ENCODE measurements at regions of chr2 and their contacts with region 1.

Region 1: GRCh38 chr2:109510136-109511028 is 103.4 kb downstream of the SEPTIN10 start:
- DNase-seq: peak; percentile 50 to 78
- H3K4me3 ChIP-seq: no peak overlapping the region
- H3K27ac ChIP-seq: no peak overlapping the region
- H3K4me1 ChIP-seq: peaks cover 5% of the 10 kb centered on the region; the same call in 1 of the 2 replicates
- H3K27me3 ChIP-seq: no peaks in the 10 kb centered on the region
- CTCF ChIP-seq: peak; percentile 93

Region 2: GRCh38 chr2:108855194-108855593 is 655.2 kb before region 1 on chr2:
- CTCF ChIA-PET with region 1: no interaction called
- POLR2A ChIA-PET with region 1: no interaction called
- intact Hi-C with region 1: loop called (anchors 5 kb)
- DNase-seq: no peak
- H3K4me3 ChIP-seq: no peak overlapping the region
- H3K27ac ChIP-seq: no peak overlapping the region
- H3K4me1 ChIP-seq: no peaks in the 10 kb centered on the region
- H3K27me3 ChIP-seq: no peaks in the 10 kb centered on the region
- CTCF ChIP-seq: peak; percentile 63

Region 3: DNA sequence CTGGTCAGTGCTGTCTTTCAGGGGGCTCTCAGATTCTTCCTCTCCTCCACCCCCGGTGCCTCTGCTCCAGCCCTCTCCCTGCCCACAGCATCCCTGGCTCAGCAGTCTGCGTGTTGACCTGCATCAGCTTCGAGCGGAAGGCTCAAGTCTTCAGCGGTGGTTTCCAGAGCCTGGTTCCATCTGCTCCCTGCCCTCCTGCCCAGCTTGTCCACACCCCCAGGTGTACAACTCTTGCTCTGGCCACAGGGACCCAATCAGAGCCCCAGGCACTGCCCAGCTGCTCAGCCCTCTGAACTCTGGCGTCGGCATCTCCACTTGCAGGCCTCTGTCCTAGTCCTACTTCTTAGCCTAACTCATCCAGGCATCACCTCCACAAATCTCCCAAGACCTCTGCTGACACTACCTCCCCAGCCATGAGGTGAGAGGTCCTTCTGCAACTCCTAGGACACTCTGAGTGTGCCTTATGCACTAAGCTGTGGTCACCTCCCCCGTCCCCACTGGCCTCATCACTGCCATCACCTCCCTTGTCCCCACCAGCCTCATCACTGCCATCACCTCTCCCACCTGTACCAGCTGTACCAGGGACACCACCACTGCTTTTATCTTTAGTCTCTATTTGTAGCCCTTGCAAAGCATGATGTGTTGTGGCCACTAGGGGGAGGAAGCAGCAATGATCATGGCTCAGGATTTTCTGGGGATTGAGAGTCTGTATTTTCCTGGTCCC is 582.3 kb before region 1 on chr2:
- CTCF ChIA-PET with region 1: no interaction called
- POLR2A ChIA-PET with region 1: no interaction called
- intact Hi-C with region 1: loop called (anchors 2 kb)
- DNase-seq: peak; percentile 20 to 50
- H3K4me3 ChIP-seq: no peak overlapping the region
- H3K27ac ChIP-seq: no peak overlapping the region
- H3K4me1 ChIP-seq: peaks cover 7% of the 10 kb centered on the region
- H3K27me3 ChIP-seq: 0 out of 2 replicates have a peak, but pooled peaks cover 3% of the 10 kb centered on the region
- CTCF ChIP-seq: peak; percentile 92

Region 4: GRCh38 chr2:109213646-109214417 is 296.6 kb before region 1 on chr2:
- CTCF ChIA-PET with region 1: interaction called, 4 read pairs
- POLR2A ChIA-PET with region 1: no interaction called
- intact Hi-C with region 1: loop called (anchors 2 kb)
- DNase-seq: peak; percentile 91 to 96
- H3K4me3 ChIP-seq: no peak overlapping the region
- H3K27ac ChIP-seq: peak overlapping the region; percentile 82
- H3K4me1 ChIP-seq: peaks cover 75% of the 10 kb centered on the region
- H3K27me3 ChIP-seq: no peaks in the 10 kb centered on the region
- CTCF ChIP-seq: no peak

Region 5: GRCh38 chr2:109409321-109410038 is 100.9 kb before region 1 on chr2:
- CTCF ChIA-PET with region 1: interaction called, 5 read pairs
- POLR2A ChIA-PET with region 1: no interaction called
- intact Hi-C with region 1: loop called (anchors 5 kb)
- DNase-seq: peak in 1 of 2 experiments; percentile 8
- H3K4me3 ChIP-seq: no peak overlapping the region
- H3K27ac ChIP-seq: no peak overlapping the region
- H3K4me1 ChIP-seq: peaks cover 21% of the 10 kb centered on the region
- H3K27me3 ChIP-seq: no peaks in the 10 kb centered on the region
- CTCF ChIP-seq: no peak

Region 6: DNA sequence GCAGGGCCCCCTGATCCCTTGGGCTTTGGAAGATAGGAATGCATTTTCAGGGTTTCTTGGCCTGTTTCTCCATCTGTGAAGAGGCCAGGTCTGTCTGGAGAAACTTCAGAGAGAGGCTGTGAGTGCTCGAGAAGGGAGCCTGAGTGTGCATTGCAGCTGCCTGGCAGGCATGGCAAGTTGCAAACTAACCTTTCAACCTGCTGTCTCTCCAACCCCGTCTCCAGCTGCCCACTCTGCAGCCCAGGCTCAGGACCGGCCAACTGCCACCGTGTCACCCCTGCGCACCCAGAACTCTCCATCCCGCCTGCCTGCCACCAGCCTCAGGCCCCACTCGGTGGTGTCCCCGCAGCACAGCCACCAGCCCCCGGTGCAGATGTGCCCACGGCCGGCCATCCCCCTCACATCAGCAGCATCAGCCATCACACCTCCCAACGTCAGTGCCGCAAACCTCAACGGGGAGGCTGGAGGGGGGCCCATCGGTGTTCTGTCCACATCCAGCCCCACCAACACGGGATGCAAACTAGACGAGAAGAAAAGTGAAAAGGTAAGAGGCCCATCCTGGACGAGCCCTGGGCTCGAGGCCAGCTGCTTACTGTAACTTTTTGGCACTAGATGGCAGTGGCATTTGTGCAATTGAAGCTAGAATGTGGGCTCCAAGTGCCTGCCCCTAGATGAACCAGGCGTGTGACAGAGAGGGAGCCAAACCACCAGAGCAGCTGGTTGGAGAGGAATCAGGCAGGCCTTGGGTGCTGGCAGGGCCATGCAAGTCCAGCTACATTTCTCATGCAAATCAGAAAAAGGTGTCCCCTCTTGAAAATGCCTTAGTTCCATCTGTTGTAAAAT is 61.2 kb before region 1 on chr2:
- CTCF ChIA-PET with region 1: no interaction called
- POLR2A ChIA-PET with region 1: no interaction called
- intact Hi-C with region 1: loop called (anchors 2 kb)
- DNase-seq: peak in 1 of 2 experiments; percentile 30
- H3K4me3 ChIP-seq: no peak overlapping the region
- H3K27ac ChIP-seq: no peak overlapping the region
- H3K4me1 ChIP-seq: no peaks in the 10 kb centered on the region
- H3K27me3 ChIP-seq: no peaks in the 10 kb centered on the region
- CTCF ChIP-seq: no peak

Measured in PC-9 (cell line).